ENCODE measurements at regions of chr6 and their contacts with region 1.

Region 1: GRCh38 chr6:134063966-134064445 is 11.6 kb upstream of the SLC2A12 start:
- DNase-seq: peak; percentile 74
- H3K4me3 Mint-ChIP-seq: no peak overlapping the region
- H3K27ac Mint-ChIP-seq: no peak overlapping the region
- H3K4me1 Mint-ChIP-seq: no peaks in the 10 kb centered on the region
- H3K27me3 Mint-ChIP-seq: no peaks in the 10 kb centered on the region

Region 2: GRCh38 chr6:133707456-133707855 is 356.6 kb before region 1 on chr6:
- CTCF ChIA-PET with region 1: no interaction called
- intact Hi-C with region 1: no loop called
- DNase-seq: no peak
- H3K4me3 Mint-ChIP-seq: no peak overlapping the region
- H3K27ac Mint-ChIP-seq: no peak overlapping the region
- H3K4me1 Mint-ChIP-seq: no peaks in the 10 kb centered on the region
- H3K27me3 Mint-ChIP-seq: peaks cover 5% of the 10 kb centered on the region

Region 3: GRCh38 chr6:133966654-133967329 is 97.2 kb before region 1 on chr6:
- CTCF ChIA-PET with region 1: interaction called, 25 read pairs
- intact Hi-C with region 1: no loop called
- DNase-seq: no peak
- H3K4me3 Mint-ChIP-seq: no peak overlapping the region
- H3K27ac Mint-ChIP-seq: no peak overlapping the region
- H3K4me1 Mint-ChIP-seq: peaks cover 64% of the 10 kb centered on the region
- H3K27me3 Mint-ChIP-seq: no peaks in the 10 kb centered on the region

Region 4: DNA sequence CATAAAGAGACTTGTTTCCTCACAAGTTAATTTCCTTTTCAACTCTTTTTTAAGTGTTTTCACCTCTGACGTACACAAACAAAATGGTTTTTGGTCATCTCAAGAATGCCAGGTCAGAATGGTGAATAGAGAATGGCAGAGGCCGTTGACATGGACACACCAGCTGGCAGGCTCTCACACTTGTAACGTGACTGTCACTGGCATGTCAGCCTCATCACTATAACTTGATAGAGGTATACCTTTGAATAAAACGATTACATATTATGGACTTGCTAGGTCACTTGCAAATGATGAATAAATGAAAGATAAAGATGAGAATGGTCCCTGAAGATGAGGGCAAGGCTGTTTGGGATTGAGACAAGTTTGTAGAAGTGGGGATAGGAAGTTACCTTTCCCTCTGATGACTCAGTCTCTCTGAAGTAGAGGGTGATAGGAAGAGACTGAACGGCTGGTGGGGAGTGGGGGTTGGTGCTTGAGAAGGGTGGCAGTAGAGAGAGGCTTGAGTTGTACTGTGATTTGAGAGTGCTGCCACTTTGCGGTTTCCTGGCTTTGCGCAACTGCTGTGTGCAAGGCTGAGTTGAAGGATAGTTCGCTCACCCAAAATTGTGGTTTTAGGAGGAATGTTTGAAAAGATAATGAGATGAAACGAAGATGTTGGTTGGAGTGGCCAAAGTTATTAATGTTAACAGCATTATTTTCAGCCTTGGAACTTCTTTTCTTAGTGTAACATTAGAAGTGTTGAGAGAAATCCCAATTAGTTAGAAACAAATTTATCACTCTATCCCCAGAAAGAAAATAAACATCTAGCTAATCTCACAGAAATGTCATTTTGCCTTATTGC is 80.7 kb before region 1 on chr6:
- CTCF ChIA-PET with region 1: interaction called, 135 read pairs
- intact Hi-C with region 1: no loop called
- DNase-seq: peak; percentile 83
- H3K4me3 Mint-ChIP-seq: no peak overlapping the region
- H3K27ac Mint-ChIP-seq: no peak overlapping the region
- H3K4me1 Mint-ChIP-seq: peaks cover 28% of the 10 kb centered on the region
- H3K27me3 Mint-ChIP-seq: no peaks in the 10 kb centered on the region

Region 5: GRCh38 chr6:134009876-134010275 is 54.1 kb before region 1 on chr6:
- CTCF ChIA-PET with region 1: no interaction called
- intact Hi-C with region 1: no loop called
- DNase-seq: no peak
- H3K4me3 Mint-ChIP-seq: no peak overlapping the region
- H3K27ac Mint-ChIP-seq: no peak overlapping the region
- H3K4me1 Mint-ChIP-seq: peaks cover 14% of the 10 kb centered on the region
- H3K27me3 Mint-ChIP-seq: peaks cover 7% of the 10 kb centered on the region

Region 6: GRCh38 chr6:134047673-134048072 is 16.3 kb before region 1 on chr6:
- CTCF ChIA-PET with region 1: interaction called, 44 read pairs
- intact Hi-C with region 1: no loop called
- DNase-seq: no peak
- H3K4me3 Mint-ChIP-seq: no peak overlapping the region
- H3K27ac Mint-ChIP-seq: no peak overlapping the region
- H3K4me1 Mint-ChIP-seq: peaks cover 8% of the 10 kb centered on the region
- H3K27me3 Mint-ChIP-seq: peaks cover 2% of the 10 kb centered on the region

Region 7: DNA sequence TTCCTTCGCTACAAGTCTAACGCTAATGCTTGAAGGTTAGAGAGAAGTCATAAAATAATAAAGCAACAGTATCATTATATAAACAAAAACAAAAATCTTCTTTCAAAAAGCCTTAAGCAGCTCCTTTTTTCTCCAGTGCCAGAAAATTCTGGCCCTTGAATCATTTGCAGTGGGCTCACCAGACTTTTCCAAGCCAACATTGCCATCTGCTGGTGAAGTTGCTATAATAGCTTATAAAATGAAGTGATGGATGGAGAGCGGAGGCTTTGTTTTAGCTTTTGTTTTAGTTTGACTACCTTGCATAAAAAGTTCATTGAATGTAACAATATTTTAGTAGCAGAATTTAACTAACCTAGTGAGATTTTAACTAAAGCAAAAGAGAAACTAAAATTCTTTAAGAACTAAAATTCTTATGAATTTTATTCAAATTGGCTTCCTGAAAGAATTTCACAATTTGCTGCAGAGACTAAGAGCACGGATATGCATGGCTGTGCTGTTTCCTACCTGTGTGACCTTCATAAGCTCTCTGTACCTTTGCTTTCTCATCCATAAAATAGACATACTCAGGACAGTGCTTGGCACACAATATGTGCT is 33.2 kb after region 1 on chr6:
- CTCF ChIA-PET with region 1: interaction called, 15 read pairs
- intact Hi-C with region 1: loop called (anchors 1 kb)
- DNase-seq: peak; percentile 80
- H3K4me3 Mint-ChIP-seq: no peak overlapping the region
- H3K27ac Mint-ChIP-seq: no peak overlapping the region
- H3K4me1 Mint-ChIP-seq: no peaks in the 10 kb centered on the region
- H3K27me3 Mint-ChIP-seq: peaks cover 7% of the 10 kb centered on the region

Region 8: GRCh38 chr6:134182528-134182927 is 118.5 kb after region 1 on chr6:
- CTCF ChIA-PET with region 1: no interaction called
- intact Hi-C with region 1: no loop called
- DNase-seq: no peak
- H3K4me3 Mint-ChIP-seq: no peak overlapping the region
- H3K27ac Mint-ChIP-seq: no peak overlapping the region
- H3K4me1 Mint-ChIP-seq: peaks cover 19% of the 10 kb centered on the region
- H3K27me3 Mint-ChIP-seq: no peaks in the 10 kb centered on the region

Measured in activated naive CD4-positive, alpha-beta T cell treated with anti-CD3 and anti-CD28 coated beads for 36 hours (primary cell).